Activated CD4-positive, alpha-beta memory T cell treated with anti-CD3 and anti-CD28 coated beads for 36 hours (primary cell): ENCODE measurements at regions of chr3 and their contacts with region 1.

Region 1: GRCh38 chr3:111338059-111338698 is 203.8 kb upstream of the CD96 start:
- DNase-seq: peak; percentile 50
- H3K4me3 Mint-ChIP-seq: no peak overlapping the region
- H3K27ac Mint-ChIP-seq: no peak overlapping the region
- H3K4me1 Mint-ChIP-seq: peaks cover 12% of the 10 kb centered on the region
- H3K27me3 Mint-ChIP-seq: peaks cover 2% of the 10 kb centered on the region

Region 2: DNA sequence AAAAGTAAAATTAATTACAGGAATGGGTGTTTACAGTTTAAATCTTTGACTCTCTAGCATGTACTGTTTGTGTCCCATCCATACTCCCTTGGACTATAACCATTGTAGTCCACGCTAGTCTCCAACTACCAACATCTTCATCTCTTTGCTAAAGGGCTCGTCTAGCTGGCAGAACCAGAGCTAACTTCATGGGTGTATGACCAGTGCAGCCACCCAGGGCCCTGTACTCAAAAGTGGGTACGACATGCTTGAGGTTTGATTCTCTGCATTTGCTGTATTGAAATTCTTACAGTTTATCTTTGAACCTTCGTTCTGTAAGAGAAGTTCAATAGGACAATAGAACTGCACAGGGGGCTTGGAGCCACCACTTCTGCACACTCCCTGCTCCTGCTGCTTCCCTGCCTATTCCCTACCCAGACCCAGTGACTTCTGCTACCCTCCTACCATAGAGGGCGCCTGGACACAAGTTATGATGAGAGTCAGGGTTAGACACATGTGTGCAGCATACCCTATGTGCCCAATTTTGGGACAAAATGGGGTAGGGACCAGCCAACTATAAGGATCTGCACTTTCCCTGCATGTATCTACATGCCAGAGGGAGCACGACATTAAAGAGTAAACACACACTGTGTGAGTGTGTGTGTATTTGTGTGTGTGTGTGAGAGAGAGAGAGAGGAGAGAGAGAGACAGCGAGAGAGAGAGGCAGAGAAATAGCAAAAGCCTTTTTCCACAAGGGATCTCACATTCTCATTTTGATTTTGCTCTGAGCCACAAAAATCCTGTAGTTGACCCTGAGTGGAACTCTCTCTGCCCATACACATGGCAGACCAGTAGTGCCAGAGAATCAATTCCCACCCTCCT is 325.6 kb before region 1 on chr3:
- CTCF ChIA-PET with region 1: no interaction called
- POLR2A ChIA-PET with region 1: no interaction called
- intact Hi-C with region 1: loop called (anchors 5 kb)
- DNase-seq: peak; percentile 31
- H3K4me3 Mint-ChIP-seq: no peak overlapping the region
- H3K27ac Mint-ChIP-seq: no peak overlapping the region
- H3K4me1 Mint-ChIP-seq: no peaks in the 10 kb centered on the region
- H3K27me3 Mint-ChIP-seq: no peaks in the 10 kb centered on the region

Region 3: GRCh38 chr3:111071257-111072015 is 266.7 kb before region 1 on chr3 and contains the start of gene NECTIN3:
- CTCF ChIA-PET with region 1: no interaction called
- POLR2A ChIA-PET with region 1: no interaction called
- intact Hi-C with region 1: loop called (anchors 2 kb)
- DNase-seq: peak; percentile 92
- H3K4me3 Mint-ChIP-seq: peak within 1 kb of the TSS; percentile 91
- H3K27ac Mint-ChIP-seq: peak within 1 kb of the TSS; percentile 75
- H3K4me1 Mint-ChIP-seq: peaks cover 41% of the 10 kb centered on the region
- H3K27me3 Mint-ChIP-seq: peaks cover 20% of the 10 kb centered on the region
- total RNA-seq, gene NECTIN3: 10.5 to 11.3 TPM

Region 4: DNA sequence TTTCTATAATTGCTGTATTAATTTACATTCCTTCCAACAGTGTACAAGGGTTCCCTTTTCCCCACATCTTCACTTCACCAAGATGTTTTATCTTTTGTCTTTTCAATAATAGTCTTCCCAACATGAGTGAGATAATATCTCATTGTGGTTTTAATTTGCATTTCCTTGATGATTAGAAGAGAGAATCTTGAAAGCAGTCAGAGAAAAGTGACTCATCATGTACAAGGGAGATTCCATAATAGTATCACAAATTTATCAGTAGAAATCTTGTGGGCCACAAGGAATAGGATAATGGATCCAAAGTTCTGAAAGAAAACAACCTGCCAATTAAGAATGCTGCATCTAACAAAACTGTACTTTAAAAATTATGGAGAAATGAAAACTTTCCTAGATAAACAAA is 77.3 kb before region 1 on chr3:
- CTCF ChIA-PET with region 1: no interaction called
- POLR2A ChIA-PET with region 1: no interaction called
- intact Hi-C with region 1: loop called (anchors 5 kb)
- DNase-seq: no peak
- H3K4me3 Mint-ChIP-seq: no peak overlapping the region
- H3K27ac Mint-ChIP-seq: no peak overlapping the region
- H3K4me1 Mint-ChIP-seq: peaks cover 13% of the 10 kb centered on the region
- H3K27me3 Mint-ChIP-seq: peaks cover 4% of the 10 kb centered on the region

Region 5: GRCh38 chr3:111311709-111312235 is 26.4 kb before region 1 on chr3:
- CTCF ChIA-PET with region 1: interaction called, 14 read pairs
- POLR2A ChIA-PET with region 1: no interaction called
- intact Hi-C with region 1: no loop called
- DNase-seq: no peak
- H3K4me3 Mint-ChIP-seq: no peak overlapping the region
- H3K27ac Mint-ChIP-seq: peak overlapping the region; percentile 73
- H3K4me1 Mint-ChIP-seq: peaks cover 30% of the 10 kb centered on the region
- H3K27me3 Mint-ChIP-seq: no peaks in the 10 kb centered on the region

Region 6: DNA sequence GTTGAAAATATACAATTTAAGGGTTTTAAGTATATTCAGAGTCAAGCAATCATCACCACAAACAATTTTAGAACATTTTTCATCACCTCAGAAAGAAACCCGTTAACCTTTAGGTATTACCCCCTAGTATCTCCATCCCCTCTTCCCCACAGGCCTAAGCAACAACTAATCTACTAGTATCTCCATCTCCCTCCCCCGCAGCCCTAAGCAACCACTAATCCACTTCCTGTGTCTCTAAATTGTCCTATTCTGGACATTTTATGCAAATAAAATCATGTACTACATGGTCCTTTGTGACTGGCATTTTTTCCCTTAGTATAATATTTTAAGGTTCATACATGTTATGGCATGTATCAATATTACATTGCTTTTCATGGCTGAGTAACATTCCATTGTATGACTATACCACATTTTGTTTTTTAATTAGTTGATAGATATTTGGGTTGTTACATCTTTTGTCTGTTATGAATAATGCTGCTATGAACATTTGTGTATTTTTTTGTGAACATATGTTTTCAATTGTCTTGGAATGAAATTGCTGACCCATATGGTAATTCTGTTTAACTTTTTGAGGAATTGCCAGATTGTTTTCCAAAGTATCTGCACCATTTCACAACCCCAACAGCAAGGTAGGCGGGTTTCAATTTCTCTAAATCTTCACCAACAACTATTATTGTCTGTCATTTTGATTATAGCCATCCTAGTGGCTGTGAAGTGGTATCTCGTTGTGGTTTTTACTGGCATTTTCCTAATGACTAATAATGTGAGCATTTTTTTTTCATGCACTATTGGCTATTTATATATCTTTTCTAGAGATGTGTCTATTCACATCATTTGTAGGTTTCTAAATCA is 11.8 kb before region 1 on chr3:
- CTCF ChIA-PET with region 1: interaction called, 11 read pairs
- POLR2A ChIA-PET with region 1: no interaction called
- intact Hi-C with region 1: no loop called
- DNase-seq: peak; percentile 34
- H3K4me3 Mint-ChIP-seq: no peak overlapping the region
- H3K27ac Mint-ChIP-seq: no peak overlapping the region
- H3K4me1 Mint-ChIP-seq: peaks cover 31% of the 10 kb centered on the region
- H3K27me3 Mint-ChIP-seq: no peaks in the 10 kb centered on the region

Region 7: GRCh38 chr3:111362381-111363009 is 24.3 kb after region 1 on chr3:
- CTCF ChIA-PET with region 1: no interaction called
- POLR2A ChIA-PET with region 1: no interaction called
- intact Hi-C with region 1: no loop called
- DNase-seq: no peak
- H3K4me3 Mint-ChIP-seq: no peak overlapping the region
- H3K27ac Mint-ChIP-seq: no peak overlapping the region
- H3K4me1 Mint-ChIP-seq: peaks cover 3% of the 10 kb centered on the region
- H3K27me3 Mint-ChIP-seq: peaks cover 2% of the 10 kb centered on the region